K562 (cell line): ENCODE measurements at regions of chr2 and their contacts with region 1.

Region 1: GRCh38 chr2:86368161-86368824 is 30.9 kb upstream of the REEP1 start:
- DNase-seq: peak; percentile 63 to 82 (median 66)
- ATAC-seq: peak; percentile 88
- H3K4me3 ChIP-seq: no peak overlapping the region
- H3K27ac ChIP-seq: no peak overlapping the region
- H3K4me1 ChIP-seq: no peaks in the 10 kb centered on the region; a peak in 2 of 5 replicates
- H3K27me3 ChIP-seq: peaks cover 2 to 13% of the 10 kb centered on the region in 2 experiments; a peak in 4 of 5 replicates
- CTCF ChIP-seq: peak; percentile 69 to 76 (median 72)
- EP300 ChIP-seq: no peak
- POLR2A ChIP-seq: no peak
- RAD21 ChIP-seq: peak; percentile 45 to 50

Region 2: DNA sequence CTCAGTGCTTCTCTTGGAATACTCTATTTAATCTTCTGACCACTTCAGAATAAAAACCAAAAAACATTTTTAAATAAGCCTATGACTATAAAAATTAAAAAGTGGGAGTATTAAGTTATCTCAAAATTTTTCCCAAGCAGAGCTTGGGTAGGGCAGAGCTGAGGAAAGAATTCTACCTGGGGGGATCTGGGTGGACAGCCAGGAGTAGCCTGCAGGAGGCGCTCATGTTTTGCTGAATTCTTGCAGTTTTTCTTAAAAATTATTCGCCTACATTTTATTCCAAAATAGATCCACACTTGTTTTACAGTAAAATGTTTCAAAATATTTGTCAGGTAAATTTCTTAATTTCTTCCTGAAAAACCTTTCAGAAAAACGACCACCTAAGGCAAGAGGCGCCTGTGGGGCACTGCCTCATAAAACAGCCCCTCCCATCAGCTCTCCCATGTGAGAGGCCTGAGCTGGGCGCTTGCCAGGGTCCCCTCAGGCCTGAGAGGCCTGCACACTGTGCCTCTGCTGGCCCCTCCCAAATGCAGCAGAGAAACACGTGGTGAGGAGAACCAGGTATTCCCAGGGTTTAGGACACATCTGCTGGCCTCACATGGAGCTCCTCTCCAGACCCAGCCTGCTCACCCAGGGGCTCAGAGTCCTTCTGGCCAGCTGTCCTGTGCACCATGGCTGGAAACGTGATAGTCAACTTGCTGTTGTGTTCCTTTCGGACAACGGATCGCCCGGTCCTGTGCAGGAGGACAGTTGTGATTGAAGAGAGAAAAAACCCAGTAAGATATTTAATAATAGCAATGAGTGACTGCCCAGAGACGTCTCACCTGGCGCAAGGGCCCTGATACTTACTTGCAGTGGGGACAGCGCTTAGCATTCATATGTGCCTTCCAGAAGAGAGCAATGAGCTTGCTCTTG is 280.1 kb before region 1 on chr2:
- CTCF ChIA-PET with region 1: no interaction called
- POLR2A ChIA-PET with region 1: no interaction called
- in situ Hi-C with region 1: no loop called
- intact Hi-C with region 1: loop called (anchors 5 kb)
- DNase-seq: peak in 3 of 4 experiments; percentile 50 to 54 (median 53)
- ATAC-seq: peak; percentile 73
- H3K4me3 ChIP-seq: no peak overlapping the region
- H3K27ac ChIP-seq: no peak overlapping the region
- H3K4me1 ChIP-seq: no peaks in the 10 kb centered on the region
- H3K27me3 ChIP-seq: no peaks in the 10 kb centered on the region
- CTCF ChIP-seq: peak; percentile 31 to 67 (median 64); a peak in 5 of 6 replicates
- EP300 ChIP-seq: no peak
- POLR2A ChIP-seq: no peak
- RAD21 ChIP-seq: peak; percentile 22 to 56; a peak in 3 of 4 replicates

Region 3: DNA sequence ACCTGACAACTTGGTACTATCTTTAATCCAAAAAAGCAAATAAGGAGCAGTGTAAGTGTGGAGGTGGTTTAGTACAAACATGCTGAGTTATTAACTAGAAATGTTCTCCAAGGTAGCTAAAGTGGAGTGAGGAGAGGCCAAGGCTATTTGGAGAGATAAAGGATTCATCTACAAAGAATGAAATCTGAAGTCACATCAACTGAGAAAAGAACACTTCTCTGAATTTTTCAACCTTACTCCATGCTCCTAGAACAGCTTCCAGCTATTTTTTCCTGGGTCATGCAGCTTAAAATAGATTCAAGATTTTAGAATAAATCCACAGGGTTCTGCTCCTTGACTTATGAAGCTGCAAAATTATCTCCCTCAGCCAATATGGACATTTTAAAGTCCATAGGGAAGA is 191.7 kb before region 1 on chr2:
- CTCF ChIA-PET with region 1: no interaction called
- POLR2A ChIA-PET with region 1: no interaction called
- in situ Hi-C with region 1: no loop called
- intact Hi-C with region 1: no loop called
- DNase-seq: no peak
- ATAC-seq: no peak
- H3K4me3 ChIP-seq: no peak overlapping the region
- H3K27ac ChIP-seq: no peak overlapping the region; the same call in 2 of the 3 replicates
- H3K4me1 ChIP-seq: no peaks in the 10 kb centered on the region
- H3K27me3 ChIP-seq: no peaks in the 10 kb centered on the region
- CTCF ChIP-seq: no peak
- EP300 ChIP-seq: no peak
- POLR2A ChIP-seq: no peak
- RAD21 ChIP-seq: no peak